Heart right ventricle (tissue), 16 donors: ENCODE measurements at regions of chr9 and their contacts with region 1.

Region 1: DNA sequence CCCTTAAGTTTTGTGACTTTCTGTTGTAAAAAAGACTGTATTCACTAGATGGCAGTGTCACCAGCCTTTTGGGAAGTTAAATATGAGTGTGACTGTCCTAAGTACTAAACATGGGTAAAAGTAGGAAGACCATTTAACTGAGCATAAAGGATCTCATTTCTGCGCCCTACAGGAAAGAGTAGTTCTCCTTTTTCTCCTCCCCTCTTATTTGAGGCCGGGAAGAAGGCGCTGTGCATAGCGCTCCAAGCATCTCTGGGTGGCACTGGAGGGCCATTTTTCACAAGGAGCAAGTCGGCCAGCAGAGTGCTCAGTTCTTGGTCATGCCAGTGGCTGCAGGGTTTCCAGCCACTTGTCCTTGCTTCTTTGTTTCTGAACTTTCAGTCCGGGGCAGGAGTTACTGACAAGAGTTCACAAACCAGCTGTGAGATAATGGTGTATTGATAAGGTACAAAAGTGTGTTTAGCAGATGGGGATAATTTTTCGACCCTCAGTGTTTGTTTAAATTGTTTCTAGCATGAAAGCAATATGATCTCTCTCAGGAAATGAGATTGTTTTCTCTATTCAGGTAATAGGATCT is 227.6 kb upstream of the DMRT1 start:
- DNase-seq: peak; percentile 62 to 79
- ATAC-seq: peak; percentile 88 to 96 (median 94)
- H3K4me3 ChIP-seq: peak overlapping the region in 1 of 10 donors; percentile 2
- H3K27ac ChIP-seq: peak overlapping the region in 9 of 10 donors; percentile 38 to 77 (median 59)
- H3K4me1 ChIP-seq: peaks cover 6 to 67% (median 30%) of the 10 kb centered on the region in 9 donors
- H3K27me3 ChIP-seq: no peaks in the 10 kb centered on the region
- CTCF ChIP-seq: peak; percentile 64 to 97 (median 87)

Region 2: DNA sequence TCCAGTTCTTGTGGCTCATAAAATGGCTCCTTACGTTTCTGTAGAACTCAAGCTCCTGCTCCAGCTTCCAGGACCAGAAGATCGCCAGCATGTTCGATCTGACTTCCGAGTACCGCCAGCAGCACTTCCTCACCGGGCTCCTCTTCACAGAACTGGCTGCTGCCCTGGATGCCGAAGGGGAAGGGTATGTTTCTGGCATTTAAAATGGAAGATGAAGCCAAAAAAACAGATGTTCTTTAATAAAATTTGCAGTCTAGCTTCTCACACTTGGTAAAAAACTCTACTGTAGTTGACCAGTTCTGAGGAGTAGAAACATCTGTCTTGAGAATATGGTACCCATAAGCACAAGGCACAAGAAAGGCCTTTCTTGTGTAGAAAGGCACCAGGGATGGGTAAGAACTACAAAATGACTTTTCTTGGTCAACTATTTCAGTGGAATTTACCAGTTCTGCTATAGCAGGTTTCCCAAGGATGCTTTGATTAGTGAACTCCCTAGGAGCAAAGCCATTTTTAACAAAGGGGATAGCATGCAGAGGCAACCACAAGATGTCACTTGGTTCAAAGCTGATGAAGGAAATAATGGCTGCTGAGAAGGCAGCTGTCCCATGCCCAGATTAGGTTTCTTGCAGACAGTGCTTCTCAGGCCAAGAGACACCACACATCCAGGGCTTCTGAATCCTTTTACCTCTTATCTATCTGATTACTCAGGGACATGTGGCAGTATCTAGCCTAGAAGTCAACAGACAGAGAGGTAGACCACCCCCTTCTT is 206.8 kb before region 1 on chr9:
- intact Hi-C with region 1: loop called in 3 of 10 experiments (anchors 10 kb)
- DNase-seq: peak in 1 of 2 donors; percentile 20
- ATAC-seq: peak; percentile 61 to 91 (median 83)
- H3K4me3 ChIP-seq: no peak overlapping the region
- H3K27ac ChIP-seq: no peak overlapping the region
- H3K4me1 ChIP-seq: no peaks in the 10 kb centered on the region
- H3K27me3 ChIP-seq: no peaks in the 10 kb centered on the region
- CTCF ChIP-seq: peak in 7 of 9 donors; percentile 29 to 59 (median 54)

Region 3: DNA sequence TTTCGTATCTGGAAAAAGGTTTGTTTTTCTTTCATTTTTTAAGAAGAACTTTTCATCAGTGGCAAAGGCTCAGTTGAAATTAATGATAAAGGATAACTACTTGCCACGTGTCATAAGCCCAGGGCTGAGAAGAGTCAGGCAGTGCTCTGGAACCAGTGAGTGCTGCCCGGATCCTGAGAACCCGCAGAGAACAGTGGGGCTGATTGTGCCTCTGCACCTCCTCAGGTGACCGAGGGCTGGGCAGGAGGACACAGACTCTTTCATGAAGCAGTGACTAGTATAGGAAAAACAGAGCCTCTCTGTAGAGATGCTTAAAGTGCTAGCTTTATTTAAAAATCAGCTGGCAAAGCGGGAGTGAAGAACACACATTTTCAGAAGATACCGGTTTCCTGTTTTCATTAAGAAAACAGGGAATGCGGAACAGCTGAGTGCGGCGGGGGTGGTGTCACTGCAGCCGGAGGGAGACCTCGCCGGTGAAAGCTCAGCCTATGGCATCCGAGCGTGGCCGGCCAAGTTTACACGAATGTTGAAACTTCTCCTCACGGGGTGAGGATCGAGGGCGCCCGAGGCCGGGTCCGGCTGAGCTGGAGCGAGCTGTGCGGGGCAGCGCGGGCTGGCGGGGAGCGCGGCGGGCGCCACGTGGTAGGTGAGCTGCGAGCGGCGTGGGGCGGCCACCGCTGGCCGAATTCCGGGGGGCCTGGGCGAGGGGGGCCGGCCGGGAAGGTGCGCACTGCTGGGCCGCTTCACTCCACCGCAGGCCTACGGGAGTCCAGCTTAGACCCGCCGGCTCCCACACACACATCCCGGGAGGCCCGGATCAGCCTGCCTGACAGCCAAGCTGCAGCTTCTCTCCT is 93.0 kb after region 1 on chr9:
- intact Hi-C with region 1: loop called in 1 of 10 experiments (anchors 10 kb)
- DNase-seq: peak; percentile 53 to 69
- ATAC-seq: peak; percentile 61 to 82 (median 69)
- H3K4me3 ChIP-seq: peak overlapping the region in 9 of 10 donors; percentile 32 to 64 (median 55)
- H3K27ac ChIP-seq: peak overlapping the region; percentile 13 to 80 (median 68)
- H3K4me1 ChIP-seq: peaks cover 6 to 60% (median 35%) of the 10 kb centered on the region in 9 donors
- H3K27me3 ChIP-seq: no peaks in the 10 kb centered on the region
- CTCF ChIP-seq: no peak

Region 4: GRCh38 chr9:763692-764524 is 150.0 kb after region 1 on chr9:
- intact Hi-C with region 1: loop called in 8 of 10 experiments (anchors 1 to 5 kb)
- DNase-seq: peak; percentile 38 to 74
- ATAC-seq: peak; percentile 90 to 98 (median 96)
- H3K4me3 ChIP-seq: peak overlapping the region in 5 of 10 donors; percentile 10 to 41 (median 29)
- H3K27ac ChIP-seq: no peak overlapping the region
- H3K4me1 ChIP-seq: peaks cover 0 to 15% (median 0%) of the 10 kb centered on the region in 9 donors
- H3K27me3 ChIP-seq: peaks cover 0 to 12% (median 0%) of the 10 kb centered on the region in 7 donors
- CTCF ChIP-seq: peak; percentile 64 to 96 (median 92)

Region 5: DNA sequence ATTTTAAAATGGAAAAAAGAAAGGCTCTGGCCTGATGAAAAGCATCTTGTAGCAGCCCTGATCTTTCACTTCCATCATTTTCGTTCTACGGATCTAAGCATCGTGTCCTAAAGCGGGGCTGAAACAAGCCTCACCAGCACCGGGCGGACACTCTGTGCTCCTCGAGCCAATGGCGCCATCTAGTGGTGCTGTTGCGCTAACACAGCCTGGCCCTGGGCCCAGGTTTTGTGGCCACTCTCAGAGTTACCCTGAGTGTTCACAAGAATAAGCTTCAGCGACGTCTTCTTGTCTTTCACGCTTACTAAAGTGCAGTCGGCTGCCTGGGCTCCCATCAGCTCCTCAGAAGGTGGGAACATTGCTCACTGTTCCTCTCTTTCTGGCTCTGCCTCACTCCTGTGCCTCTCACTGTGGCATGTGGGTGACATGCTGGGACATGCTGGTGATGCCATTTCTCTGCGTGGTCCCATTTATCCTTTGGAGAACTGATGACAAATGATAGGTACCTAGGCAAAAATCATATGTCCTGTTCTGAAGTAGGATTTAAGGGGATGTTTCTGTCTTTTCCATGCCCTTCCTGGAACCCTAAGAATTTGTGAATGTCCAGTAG is 395.3 kb after region 1 on chr9:
- intact Hi-C with region 1: loop called in 3 of 10 experiments (anchors 5 to 10 kb)
- DNase-seq: peak; percentile 72 to 84
- ATAC-seq: peak; percentile 87 to 95 (median 92)
- H3K4me3 ChIP-seq: no peak overlapping the region
- H3K27ac ChIP-seq: no peak overlapping the region
- H3K4me1 ChIP-seq: peaks cover 0 to 22% (median 0%) of the 10 kb centered on the region in 9 donors
- H3K27me3 ChIP-seq: peaks cover 0 to 58% (median 26%) of the 10 kb centered on the region in 7 donors
- CTCF ChIP-seq: peak; percentile 89 to 98 (median 94)